Endothelial cell of umbilical vein (primary cell): ENCODE measurements at regions of chr5 and their contacts with region 1.

Region 1: DNA sequence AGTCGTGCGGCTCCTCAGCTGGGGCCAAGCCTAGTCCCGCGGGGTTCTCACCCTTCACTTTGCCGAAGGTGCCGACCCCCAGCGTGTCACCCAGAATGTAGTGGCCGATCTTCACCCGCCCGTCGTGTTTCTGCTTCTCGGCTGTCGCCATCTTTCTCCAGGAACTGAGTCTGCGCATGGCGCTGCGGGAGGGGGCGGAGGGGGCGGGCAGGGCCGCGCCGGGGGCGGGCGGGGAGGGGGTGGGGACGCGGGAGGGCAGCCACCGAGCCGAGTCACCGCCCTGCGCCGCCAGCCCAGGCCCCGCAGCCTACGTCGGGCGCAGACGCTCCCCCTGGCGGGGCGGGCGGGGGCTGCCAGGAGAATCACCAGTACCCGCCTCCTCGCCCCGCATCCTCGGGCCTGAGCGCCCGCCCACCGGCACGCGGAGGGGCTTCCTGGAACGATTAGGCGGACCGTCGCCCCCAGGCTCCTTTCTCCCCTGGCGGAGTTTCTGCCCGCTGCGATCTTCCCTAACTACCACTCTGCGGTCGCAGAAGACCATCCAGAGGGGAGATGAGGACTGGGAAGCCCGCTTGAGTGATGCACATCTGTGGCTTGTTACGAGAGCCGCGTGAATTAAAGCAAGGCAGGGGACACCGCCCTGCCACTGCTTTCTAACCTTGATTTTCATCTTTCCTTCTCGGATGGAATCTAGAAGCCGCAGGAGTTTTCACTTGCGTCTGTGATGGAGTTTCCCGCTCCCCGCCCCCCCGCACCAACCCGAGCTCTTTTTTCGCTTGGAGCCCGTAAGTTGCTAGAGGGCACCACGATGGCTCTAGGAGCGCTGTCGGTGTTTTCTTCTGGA is at the start of gene PRKAA1:
- DNase-seq: peak; percentile 86
- H3K4me3 ChIP-seq: peak within 1 kb of the TSS; percentile 89 to 96 (median 94)
- H3K27ac ChIP-seq: peak within 1 kb of the TSS; percentile 93
- H3K4me1 ChIP-seq: peaks cover 19% of the 10 kb centered on the region
- H3K27me3 ChIP-seq: no peaks in the 10 kb centered on the region
- CTCF ChIP-seq: peak; percentile 42 to 74
- POLR2A ChIP-seq: peak; percentile 93
- total RNA-seq, gene PRKAA1: 83.5 and 97.2 TPM in 2 replicates

Region 2: DNA sequence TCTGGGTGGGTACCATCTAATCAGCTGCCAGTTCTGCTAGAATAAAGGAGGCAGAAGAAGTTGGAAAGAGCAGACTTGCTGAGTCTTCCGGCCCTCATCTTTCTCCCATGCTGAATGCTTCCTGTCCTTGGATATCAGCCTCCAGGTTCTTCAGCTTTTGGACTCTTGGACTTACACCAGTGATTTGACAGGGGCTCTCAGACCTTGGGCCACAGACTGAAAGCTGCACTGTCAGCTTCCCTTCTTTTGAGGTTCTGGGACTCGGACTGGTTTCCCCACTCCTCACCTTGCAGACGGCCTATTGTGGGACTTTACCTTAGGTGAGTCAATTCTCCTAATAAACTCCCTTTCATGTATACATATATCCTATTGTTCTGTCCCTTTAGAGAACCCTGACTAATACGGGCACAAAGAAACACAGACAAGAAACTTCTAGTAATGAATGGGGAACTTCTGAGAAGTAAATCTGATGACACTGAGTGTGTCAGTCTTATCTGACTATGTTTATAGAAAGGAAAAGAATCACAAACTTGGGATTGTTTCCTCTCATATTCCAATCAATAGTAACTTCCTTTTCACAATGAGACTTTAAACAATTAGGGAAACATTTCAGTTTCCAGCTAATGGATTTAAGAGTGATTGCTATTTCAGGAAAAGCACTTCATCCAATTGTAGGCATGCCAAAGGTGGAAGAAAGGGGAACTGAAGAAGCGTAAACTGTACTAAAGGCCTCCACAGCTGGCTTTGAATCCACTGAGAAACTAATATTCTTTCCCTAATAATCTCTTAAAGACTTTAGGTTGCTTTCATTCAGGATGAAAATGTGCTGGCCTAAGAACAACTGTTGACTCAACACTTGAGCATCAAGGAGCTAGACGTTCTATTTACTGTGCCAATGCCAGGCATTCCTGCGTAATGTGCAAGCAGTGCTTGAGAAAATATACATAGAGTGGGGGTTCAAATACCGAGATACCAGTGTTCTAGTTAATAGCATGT is 246.4 kb before region 1 on chr5:
- CTCF ChIA-PET with region 1: no interaction called
- POLR2A ChIA-PET with region 1: no interaction called
- dilution Hi-C with region 1: no loop called
- intact Hi-C with region 1: no loop called
- DNase-seq: peak; percentile 81
- H3K4me3 ChIP-seq: peak overlapping the region in 2 of 3 experiments; percentile 8 to 17
- H3K27ac ChIP-seq: peak overlapping the region; percentile 92
- H3K4me1 ChIP-seq: peaks cover 25% of the 10 kb centered on the region
- H3K27me3 ChIP-seq: no peaks in the 10 kb centered on the region
- CTCF ChIP-seq: no peak
- POLR2A ChIP-seq: peak; percentile 30

Region 3: GRCh38 chr5:40755407-40756365 is 42.5 kb before region 1 on chr5 and contains the start of gene TTC33:
- CTCF ChIA-PET with region 1: interaction called, 3 read pairs
- POLR2A ChIA-PET with region 1: no interaction called
- dilution Hi-C with region 1: no loop called
- intact Hi-C with region 1: loop called (anchors 1 kb)
- DNase-seq: peak; percentile 94
- H3K4me3 ChIP-seq: peak within 1 kb of the TSS; percentile 55 to 92 (median 86)
- H3K27ac ChIP-seq: peak within 1 kb of the TSS; percentile 75
- H3K4me1 ChIP-seq: peaks cover 10% of the 10 kb centered on the region
- H3K27me3 ChIP-seq: no peaks in the 10 kb centered on the region
- CTCF ChIP-seq: peak; percentile 72 to 83
- POLR2A ChIP-seq: peak; percentile 20
- total RNA-seq, gene TTC33: 11.7 and 14.2 TPM in 2 replicates

Region 4: GRCh38 chr5:40774623-40775022 is 23.6 kb before region 1 on chr5:
- CTCF ChIA-PET with region 1: interaction called, 7 read pairs
- POLR2A ChIA-PET with region 1: interaction called, 3 read pairs
- dilution Hi-C with region 1: no loop called
- intact Hi-C with region 1: loop called (anchors 2 kb)
- DNase-seq: no peak
- H3K4me3 ChIP-seq: no peak overlapping the region
- H3K27ac ChIP-seq: no peak overlapping the region
- H3K4me1 ChIP-seq: no peaks in the 10 kb centered on the region
- H3K27me3 ChIP-seq: no peaks in the 10 kb centered on the region
- CTCF ChIP-seq: no peak
- POLR2A ChIP-seq: no peak

Region 5: DNA sequence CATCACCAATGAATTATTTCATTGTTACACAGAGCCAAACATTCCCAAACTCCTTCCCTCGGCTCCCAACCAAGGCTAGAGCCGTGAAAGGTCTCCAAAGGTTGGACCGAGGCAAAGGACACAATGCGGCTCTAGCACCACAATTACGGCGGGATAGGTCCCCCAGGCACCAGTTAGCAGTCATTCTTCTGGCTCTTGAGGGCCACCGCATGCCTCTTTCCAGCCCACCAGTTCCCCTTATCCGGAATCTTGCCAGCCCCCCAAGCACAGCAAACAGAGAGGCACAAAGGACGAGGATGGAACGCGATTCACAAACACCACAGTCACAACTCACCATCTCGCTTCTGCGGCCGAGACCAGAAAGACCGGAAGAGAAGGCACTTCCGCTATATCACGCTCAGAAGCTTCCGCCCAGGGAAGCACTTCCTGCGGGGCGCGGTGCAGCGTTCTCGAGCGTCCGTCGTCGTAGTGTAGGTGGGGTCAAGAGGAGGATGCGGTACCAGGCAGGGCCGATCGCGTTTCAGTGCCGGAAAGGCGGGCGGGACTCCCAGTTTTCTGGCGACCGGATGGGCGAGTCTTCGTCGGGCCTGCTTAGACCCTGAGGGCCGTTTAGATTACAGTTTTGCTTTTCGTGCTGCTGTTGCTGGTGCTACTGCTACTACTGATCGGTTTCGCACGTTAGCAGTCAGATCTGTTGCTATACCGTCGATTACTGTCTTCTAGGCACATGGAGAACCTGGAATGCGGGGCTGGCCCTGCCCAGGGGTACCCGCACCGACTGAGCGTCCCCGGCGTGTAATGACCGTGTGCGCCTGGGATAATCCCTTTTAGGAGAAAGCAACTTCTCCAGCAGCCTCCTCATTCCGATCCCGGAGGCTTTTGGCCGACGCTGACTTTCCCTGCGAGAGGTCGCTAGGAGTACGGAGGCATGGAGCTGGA is 36.9 kb after region 1 on chr5 and contains the start of gene RPL37:
- CTCF ChIA-PET with region 1: interaction called, 4 read pairs
- POLR2A ChIA-PET with region 1: interaction called, 4 read pairs
- dilution Hi-C with region 1: no loop called
- intact Hi-C with region 1: loop called (anchors 1 kb)
- DNase-seq: peak; percentile 94
- H3K4me3 ChIP-seq: peak within 1 kb of the TSS; percentile 44 to 90 (median 66)
- H3K27ac ChIP-seq: peak within 1 kb of the TSS; percentile 71
- H3K4me1 ChIP-seq: peaks cover 28% of the 10 kb centered on the region
- H3K27me3 ChIP-seq: no peaks in the 10 kb centered on the region
- CTCF ChIP-seq: no peak
- POLR2A ChIP-seq: peak; percentile 99
- total RNA-seq, gene RPL37: 1,348 and 1,380 TPM in 2 replicates

Region 6: DNA sequence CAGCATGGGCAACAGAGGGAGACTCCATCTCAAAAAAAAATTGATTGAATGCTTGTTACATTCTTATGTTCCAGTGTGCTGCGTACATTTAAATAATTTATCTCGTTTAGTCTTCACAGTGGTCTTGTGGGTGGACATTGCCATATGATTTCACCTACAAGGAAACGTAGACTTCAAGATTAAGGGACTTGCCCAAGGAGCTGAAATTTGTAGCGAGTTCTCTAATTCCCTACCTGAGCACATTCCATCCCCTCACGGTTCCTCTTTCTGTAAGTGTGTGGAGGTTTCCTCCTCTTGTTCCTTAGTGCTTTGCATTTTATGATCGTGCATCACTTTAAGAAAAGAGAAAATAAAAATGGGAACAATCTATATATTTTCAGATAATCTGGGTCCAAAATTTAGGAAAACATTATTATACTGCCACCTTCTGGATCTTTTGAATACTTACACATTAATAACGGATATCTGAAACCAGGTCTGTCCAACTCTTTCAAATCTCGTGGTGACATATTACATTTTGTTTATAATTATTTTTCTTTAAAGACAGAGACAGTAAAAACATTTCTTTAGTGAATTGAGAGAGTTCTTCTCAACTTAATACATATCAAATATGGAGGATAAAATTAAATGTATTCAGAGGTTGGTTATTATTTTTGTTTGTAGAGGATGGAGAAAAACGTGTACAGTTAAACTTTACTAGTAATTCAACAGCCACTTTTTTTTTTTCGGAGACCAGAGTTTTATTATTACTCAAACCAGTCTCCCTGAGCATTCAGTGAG is 81.1 kb after region 1 on chr5:
- CTCF ChIA-PET with region 1: no interaction called
- POLR2A ChIA-PET with region 1: no interaction called
- dilution Hi-C with region 1: no loop called
- intact Hi-C with region 1: no loop called
- DNase-seq: peak; percentile 52
- H3K4me3 ChIP-seq: no peak overlapping the region
- H3K27ac ChIP-seq: no peak overlapping the region
- H3K4me1 ChIP-seq: no peaks in the 10 kb centered on the region
- H3K27me3 ChIP-seq: no peaks in the 10 kb centered on the region
- CTCF ChIP-seq: no peak
- POLR2A ChIP-seq: no peak

Region 7: GRCh38 chr5:40991168-40991980 is 193.1 kb after region 1 on chr5:
- CTCF ChIA-PET with region 1: no interaction called
- POLR2A ChIA-PET with region 1: no interaction called
- dilution Hi-C with region 1: no loop called
- intact Hi-C with region 1: no loop called
- DNase-seq: peak; percentile 90
- H3K4me3 ChIP-seq: no peak overlapping the region
- H3K27ac ChIP-seq: no peak overlapping the region
- H3K4me1 ChIP-seq: no peaks in the 10 kb centered on the region
- H3K27me3 ChIP-seq: no peaks in the 10 kb centered on the region
- CTCF ChIP-seq: no peak
- POLR2A ChIP-seq: no peak